ENCODE measurements at regions of chr14 and their contacts with region 1.

Region 1: GRCh38 chr14:53044486-53044885 is 93.6 kb upstream of the FERMT2 start:
- DNase-seq: no peak
- ATAC-seq: no peak
- H3K4me3 Mint-ChIP-seq: no peak overlapping the region
- H3K27ac Mint-ChIP-seq: no peak overlapping the region
- H3K4me1 Mint-ChIP-seq: peaks cover 4% of the 10 kb centered on the region
- H3K27me3 Mint-ChIP-seq: no peaks in the 10 kb centered on the region

Region 2: DNA sequence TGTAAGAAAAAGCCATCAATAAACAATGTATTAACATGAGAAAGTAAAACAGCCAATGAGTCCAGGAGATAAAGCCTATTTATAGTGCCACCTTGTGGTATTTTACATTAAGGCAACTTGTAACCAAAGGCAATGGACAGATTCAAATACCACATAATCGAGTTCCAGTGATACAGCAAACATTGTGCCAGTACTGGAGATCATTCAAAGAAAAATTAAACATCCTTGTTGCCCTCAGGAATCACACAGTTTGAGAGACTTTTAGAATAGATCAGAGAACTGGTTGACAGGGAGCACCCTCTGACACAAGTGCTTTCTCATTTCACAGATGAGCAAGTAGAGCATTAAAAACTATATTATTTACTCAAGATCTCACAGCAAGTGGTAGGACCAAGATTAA is 10.5 kb after region 1 on chr14:
- CTCF ChIA-PET with region 1: interaction called, 19 read pairs
- POLR2A ChIA-PET with region 1: no interaction called
- DNase-seq: no peak
- ATAC-seq: peak; percentile 65
- H3K4me3 Mint-ChIP-seq: no peak overlapping the region
- H3K27ac Mint-ChIP-seq: no peak overlapping the region
- H3K4me1 Mint-ChIP-seq: no peaks in the 10 kb centered on the region
- H3K27me3 Mint-ChIP-seq: no peaks in the 10 kb centered on the region